ENCODE measurements at regions of chr15 and their contacts with region 1.

Region 1: DNA sequence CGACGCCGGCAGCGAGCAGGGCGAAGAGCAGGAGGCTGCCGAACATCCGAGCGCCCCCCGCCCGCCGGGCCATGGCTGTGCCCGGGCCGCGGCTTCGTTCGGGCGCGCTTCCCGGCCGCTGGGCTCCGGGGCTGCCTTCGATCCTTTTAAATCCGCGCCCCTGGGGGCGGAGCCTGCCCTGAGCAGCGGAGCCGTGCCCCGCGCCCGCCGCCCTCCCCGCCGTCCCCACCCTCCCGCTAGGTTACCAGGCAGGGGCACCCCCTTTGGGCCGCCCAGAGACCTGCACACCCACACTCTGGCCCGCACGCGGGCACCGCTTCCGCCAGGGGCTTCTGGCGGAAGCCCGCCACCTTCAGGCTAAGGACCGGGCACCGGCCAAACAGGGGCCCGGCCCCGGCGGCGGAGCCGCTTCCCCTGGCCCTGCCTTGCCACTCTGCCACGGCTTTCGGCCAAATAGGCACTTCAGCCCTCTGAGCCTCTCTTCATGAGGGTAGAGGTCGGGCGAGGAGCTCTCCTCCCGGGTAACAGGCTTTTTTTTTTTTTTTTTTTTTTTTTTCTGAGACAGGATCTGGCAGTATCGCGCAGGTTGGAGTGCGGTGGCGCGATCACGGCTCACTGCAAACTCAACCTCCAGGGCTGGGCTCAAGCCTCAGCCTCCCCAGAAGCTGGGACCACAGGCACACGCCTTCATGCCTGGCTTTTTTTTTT is at the start of gene NMB:
- DNase-seq: peak; percentile 85
- ATAC-seq: peak; percentile 72
- H3K4me3 Mint-ChIP-seq: peak within 1 kb of the TSS; percentile 69
- H3K27ac Mint-ChIP-seq: peak within 1 kb of the TSS; percentile 80
- H3K4me1 Mint-ChIP-seq: peaks cover 40% of the 10 kb centered on the region
- H3K27me3 Mint-ChIP-seq: no peaks in the 10 kb centered on the region
- total RNA-seq, gene NMB: 3.3 to 4.1 TPM

Region 2: DNA sequence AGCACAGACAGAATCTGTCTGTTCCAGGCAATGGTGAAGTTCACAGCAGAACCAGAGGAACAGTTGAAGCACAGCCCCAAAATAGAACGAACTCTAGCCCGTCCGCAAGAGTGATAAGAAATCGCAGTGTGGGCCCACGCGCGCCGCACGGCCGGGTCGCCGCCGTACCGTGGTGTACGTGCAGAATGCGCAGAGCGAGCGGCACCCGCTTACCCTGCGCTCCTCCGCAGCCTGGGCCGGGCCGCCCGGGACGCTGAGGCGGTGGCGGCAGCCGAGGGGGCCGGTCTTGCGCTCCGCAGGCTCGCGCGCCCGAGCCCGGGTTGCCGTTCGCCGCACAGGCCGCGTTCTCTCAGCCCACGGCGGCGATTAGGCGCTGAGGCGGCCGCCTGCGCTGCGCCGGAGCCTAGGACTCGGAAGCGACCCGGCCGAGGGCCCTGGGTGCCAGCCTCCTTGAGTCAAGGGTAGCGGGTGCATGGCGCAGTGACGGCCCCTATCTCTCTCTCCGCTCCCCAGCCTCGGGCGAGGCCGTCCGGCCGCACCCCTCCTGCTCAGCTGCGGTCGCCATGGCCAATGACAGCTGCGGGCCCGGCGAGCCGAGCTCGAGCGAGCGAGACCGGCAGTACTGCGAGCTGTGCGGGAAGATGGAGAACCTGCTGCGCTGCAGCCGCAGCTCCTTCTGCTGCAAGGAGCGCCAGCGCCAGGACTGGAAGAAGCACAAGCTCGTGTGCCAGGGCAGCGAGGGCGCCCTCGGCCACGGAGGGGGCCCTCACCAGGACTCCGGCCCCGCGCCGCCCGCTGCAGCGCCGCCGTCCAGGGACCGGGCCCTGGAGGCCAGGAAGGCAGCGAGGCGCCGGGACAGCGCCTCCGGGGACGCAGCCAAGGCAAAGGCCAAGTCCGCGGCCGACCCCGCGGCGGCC is 24.7 kb before region 1 on chr15:
- CTCF ChIA-PET with region 1: interaction called, 17 read pairs
- POLR2A ChIA-PET with region 1: interaction called, 11 read pairs
- DNase-seq: peak; percentile 73
- ATAC-seq: peak; percentile 58
- H3K4me3 Mint-ChIP-seq: peak overlapping the region; percentile 88
- H3K27ac Mint-ChIP-seq: peak overlapping the region; percentile 94
- H3K4me1 Mint-ChIP-seq: peaks cover 55% of the 10 kb centered on the region
- H3K27me3 Mint-ChIP-seq: no peaks in the 10 kb centered on the region

Region 3: GRCh38 chr15:84879088-84879792 is 221.0 kb after region 1 on chr15:
- CTCF ChIA-PET with region 1: interaction called, 16 read pairs
- POLR2A ChIA-PET with region 1: no interaction called
- DNase-seq: no peak
- ATAC-seq: no peak
- H3K4me3 Mint-ChIP-seq: no peak overlapping the region
- H3K27ac Mint-ChIP-seq: no peak overlapping the region
- H3K4me1 Mint-ChIP-seq: peaks cover 2% of the 10 kb centered on the region
- H3K27me3 Mint-ChIP-seq: peaks cover 3% of the 10 kb centered on the region

Measured in activated CD8-positive, alpha-beta T cell treated with anti-CD3 and anti-CD28 coated beads, Interleukin-2, amount 10 ng/mL, durations not matched to agents 7 days and 5 days (primary cell).